ENCODE measurements at regions of chr5 and their contacts with region 1.

Region 1: GRCh38 chr5:102681407-102681983 is 73.6 kb upstream of the PAM start:
- DNase-seq: peak; percentile 93
- ATAC-seq: peak; percentile 74
- H3K4me3 ChIP-seq: no peak overlapping the region
- H3K27ac ChIP-seq: no peak overlapping the region
- H3K4me1 ChIP-seq: peaks cover 36% of the 10 kb centered on the region
- H3K27me3 ChIP-seq: no peaks in the 10 kb centered on the region
- CTCF ChIP-seq: peak; percentile 99

Region 2: GRCh38 chr5:102715082-102715819 is 33.8 kb after region 1 on chr5:
- CTCF ChIA-PET with region 1: interaction called, 13 read pairs
- POLR2A ChIA-PET with region 1: no interaction called
- intact Hi-C with region 1: loop called (anchors 1 kb)
- DNase-seq: peak; percentile 84
- ATAC-seq: peak; percentile 42
- H3K4me3 ChIP-seq: no peak overlapping the region
- H3K27ac ChIP-seq: no peak overlapping the region
- H3K4me1 ChIP-seq: peaks cover 39% of the 10 kb centered on the region
- H3K27me3 ChIP-seq: no peaks in the 10 kb centered on the region
- CTCF ChIP-seq: no peak

Region 3: GRCh38 chr5:102778478-102778877 is 97.0 kb after region 1 on chr5:
- CTCF ChIA-PET with region 1: interaction called, 15 read pairs
- POLR2A ChIA-PET with region 1: no interaction called
- intact Hi-C with region 1: loop called (anchors 1 kb)
- DNase-seq: peak; percentile 64
- ATAC-seq: peak; percentile 53
- H3K4me3 ChIP-seq: no peak overlapping the region
- H3K27ac ChIP-seq: peak overlapping the region; percentile 3; the same call in 1 of the 2 replicates
- H3K4me1 ChIP-seq: peaks cover 27% of the 10 kb centered on the region
- H3K27me3 ChIP-seq: no peaks in the 10 kb centered on the region
- CTCF ChIP-seq: no peak

Region 4: GRCh38 chr5:102865510-102866236 is 184.2 kb after region 1 on chr5:
- CTCF ChIA-PET with region 1: no interaction called
- POLR2A ChIA-PET with region 1: no interaction called
- intact Hi-C with region 1: loop called (anchors 2 kb)
- DNase-seq: peak; percentile 81
- ATAC-seq: peak; percentile 81
- H3K4me3 ChIP-seq: peak overlapping the region; percentile 87
- H3K27ac ChIP-seq: peak overlapping the region; percentile 58
- H3K4me1 ChIP-seq: peaks cover 22% of the 10 kb centered on the region
- H3K27me3 ChIP-seq: no peaks in the 10 kb centered on the region
- CTCF ChIP-seq: no peak

Region 5: GRCh38 chr5:103041071-103041676 is 359.7 kb after region 1 on chr5:
- CTCF ChIA-PET with region 1: interaction called, 4 read pairs
- POLR2A ChIA-PET with region 1: no interaction called
- intact Hi-C with region 1: loop called (anchors 1 kb)
- DNase-seq: peak; percentile 88
- ATAC-seq: peak; percentile 78
- H3K4me3 ChIP-seq: no peak overlapping the region
- H3K27ac ChIP-seq: no peak overlapping the region
- H3K4me1 ChIP-seq: peaks cover 8% of the 10 kb centered on the region; the same call in 1 of the 2 replicates
- H3K27me3 ChIP-seq: no peaks in the 10 kb centered on the region
- CTCF ChIP-seq: peak; percentile 82

Measured in PC-3 (cell line).